ENCODE measurements at regions of chr20 and their contacts with region 1.

Region 1: GRCh38 chr20:13819885-13820645 is 35.2 kb downstream of the NDUFAF5 start:
- DNase-seq: peak; percentile 16 to 74
- H3K4me3 ChIP-seq: no peak overlapping the region
- H3K27ac ChIP-seq: no peak overlapping the region
- H3K4me1 ChIP-seq: 0 out of 2 replicates have a peak, but pooled peaks cover 7% of the 10 kb centered on the region
- H3K27me3 ChIP-seq: no peaks in the 10 kb centered on the region
- CTCF ChIP-seq: peak; percentile 84

Region 2: GRCh38 chr20:12860619-12861247 is 959.3 kb before region 1 on chr20:
- CTCF ChIA-PET with region 1: no interaction called
- POLR2A ChIA-PET with region 1: no interaction called
- intact Hi-C with region 1: no loop called
- DNase-seq: no peak
- H3K4me3 ChIP-seq: no peak overlapping the region
- H3K27ac ChIP-seq: no peak overlapping the region
- H3K4me1 ChIP-seq: no peaks in the 10 kb centered on the region
- H3K27me3 ChIP-seq: no peaks in the 10 kb centered on the region
- CTCF ChIP-seq: no peak

Region 3: GRCh38 chr20:13784893-13785715 is 35.0 kb before region 1 on chr20 and contains the starts of genes ESF1 and NDUFAF5:
- CTCF ChIA-PET with region 1: no interaction called
- POLR2A ChIA-PET with region 1: no interaction called
- intact Hi-C with region 1: no loop called
- DNase-seq: peak; percentile 92 to 93
- H3K4me3 ChIP-seq: peak within 1 kb of the TSS; percentile 98
- H3K27ac ChIP-seq: peak within 1 kb of the TSS; percentile 76
- H3K4me1 ChIP-seq: peaks cover 23% of the 10 kb centered on the region
- H3K27me3 ChIP-seq: no peaks in the 10 kb centered on the region
- CTCF ChIP-seq: no peak
- total RNA-seq, gene ESF1: 12.4 and 14.8 TPM in 2 replicates
- total RNA-seq, gene NDUFAF5: 22.3 and 24.0 TPM in 2 replicates

Region 4: DNA sequence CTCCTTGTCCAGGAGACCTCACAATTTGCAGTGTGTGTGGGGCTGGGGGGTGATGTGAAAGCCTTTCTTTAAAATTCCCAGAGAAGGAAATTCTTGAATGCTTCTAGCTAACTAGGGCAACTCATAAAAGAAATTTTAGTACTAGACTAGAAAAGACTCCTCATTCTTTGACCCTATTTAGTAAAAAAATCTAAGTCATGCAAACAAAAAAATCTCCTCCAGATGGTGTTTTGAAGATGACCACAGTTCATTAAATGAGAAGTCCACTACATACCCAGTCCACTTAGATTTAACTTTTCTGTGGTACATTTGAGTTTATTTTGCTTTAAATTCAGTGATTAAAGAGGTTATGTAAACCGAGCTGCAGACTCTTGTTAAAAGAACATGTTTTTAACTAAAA is 32.2 kb after region 1 on chr20:
- CTCF ChIA-PET with region 1: no interaction called
- POLR2A ChIA-PET with region 1: no interaction called
- intact Hi-C with region 1: no loop called
- DNase-seq: no peak
- H3K4me3 ChIP-seq: no peak overlapping the region
- H3K27ac ChIP-seq: no peak overlapping the region
- H3K4me1 ChIP-seq: no peaks in the 10 kb centered on the region
- H3K27me3 ChIP-seq: peaks cover 16% of the 10 kb centered on the region
- CTCF ChIP-seq: no peak

Region 5: DNA sequence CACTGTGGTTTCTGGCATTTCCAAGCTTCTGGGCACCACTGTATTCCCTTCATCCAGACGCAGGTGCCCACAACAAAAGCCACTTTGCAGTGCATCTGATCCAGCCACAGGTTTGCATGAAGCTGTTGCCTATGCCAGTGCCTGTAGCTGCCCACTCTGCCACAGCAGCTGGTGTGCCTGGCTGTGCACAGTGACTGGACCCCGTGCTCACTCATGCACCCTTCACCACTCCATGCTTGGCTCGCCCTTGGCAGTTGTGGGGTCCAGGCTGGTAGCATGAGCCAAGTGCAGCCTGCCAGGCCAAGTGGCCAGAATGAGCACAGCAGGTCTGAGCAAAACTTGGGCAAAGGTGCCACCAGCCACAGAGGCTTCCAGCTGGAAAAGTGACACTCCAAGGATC is 127.7 kb after region 1 on chr20:
- CTCF ChIA-PET with region 1: no interaction called
- POLR2A ChIA-PET with region 1: no interaction called
- intact Hi-C with region 1: loop called (anchors 10 kb)
- DNase-seq: no peak
- H3K4me3 ChIP-seq: no peak overlapping the region
- H3K27ac ChIP-seq: no peak overlapping the region
- H3K4me1 ChIP-seq: no peaks in the 10 kb centered on the region
- H3K27me3 ChIP-seq: no peaks in the 10 kb centered on the region
- CTCF ChIP-seq: no peak